Motor neuron (in vitro differentiated cells): ENCODE measurements at regions of chr14 and their contacts with region 1.

Region 1: DNA sequence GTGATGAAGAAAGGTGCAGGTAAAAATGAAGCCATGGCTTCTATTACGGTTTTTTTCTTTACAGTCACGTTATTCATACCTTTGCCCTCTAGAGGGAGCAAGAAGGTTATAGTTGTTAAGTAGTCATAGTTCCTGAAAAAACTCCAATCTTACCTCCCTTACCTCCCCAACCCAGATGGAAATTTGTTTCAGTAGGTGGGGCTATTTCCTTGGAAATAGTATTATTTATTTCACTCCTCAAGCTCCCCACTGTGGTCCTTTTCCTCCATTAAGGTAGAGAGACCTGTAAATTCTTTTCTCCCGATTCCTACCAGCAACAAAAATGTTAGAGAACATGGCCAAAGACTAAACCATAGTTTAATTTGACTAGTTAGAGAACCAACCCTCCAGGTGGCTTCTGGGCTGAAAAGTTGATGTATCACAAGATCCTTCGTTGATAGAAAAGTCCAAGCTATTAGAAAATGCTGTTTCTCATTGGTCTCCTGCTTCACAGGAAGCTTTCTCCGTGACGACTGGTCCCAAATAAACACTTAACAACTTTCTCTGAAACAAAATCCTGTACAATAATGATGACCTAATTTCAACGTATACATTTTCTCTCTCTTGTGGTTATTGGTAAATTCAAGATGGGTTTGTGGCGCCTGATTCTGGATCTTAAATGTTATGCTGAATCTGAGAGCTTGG is 43.5 kb downstream of the TMX1 start:
- ATAC-seq: peak; percentile 72 to 97 (median 82)
- H3K4me3 ChIP-seq: no peak overlapping the region
- H3K27ac ChIP-seq: no peak overlapping the region
- H3K4me1 ChIP-seq: no peaks in the 10 kb centered on the region

Region 2: DNA sequence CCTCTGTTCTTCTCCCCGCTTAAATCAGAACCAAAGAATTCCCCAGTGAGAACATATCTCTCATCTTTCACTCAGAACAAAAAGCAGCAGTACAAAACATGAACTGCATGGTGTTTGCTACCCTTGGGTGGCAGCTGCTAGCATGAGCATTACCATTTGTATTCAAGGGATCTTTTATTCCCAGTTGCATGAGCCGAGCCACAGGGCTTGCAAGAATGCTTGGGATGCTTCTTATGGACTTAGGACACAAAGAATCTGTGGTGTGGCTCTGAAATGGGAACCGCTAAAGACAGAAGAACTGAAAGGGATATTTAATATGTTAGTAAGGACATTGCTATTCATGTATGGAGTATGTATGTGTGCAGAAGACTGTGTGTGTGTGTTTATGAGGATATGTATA is 147.1 kb after region 1 on chr14:
- in situ Hi-C with region 1: no loop called
- ATAC-seq: peak; percentile 36 to 93 (median 84)
- H3K4me3 ChIP-seq: no peak overlapping the region
- H3K27ac ChIP-seq: peak overlapping the region in 1 of 2 donors; percentile 26
- H3K4me1 ChIP-seq: peaks cover 34 to 40% of the 10 kb centered on the region in 2 donors

Region 3: DNA sequence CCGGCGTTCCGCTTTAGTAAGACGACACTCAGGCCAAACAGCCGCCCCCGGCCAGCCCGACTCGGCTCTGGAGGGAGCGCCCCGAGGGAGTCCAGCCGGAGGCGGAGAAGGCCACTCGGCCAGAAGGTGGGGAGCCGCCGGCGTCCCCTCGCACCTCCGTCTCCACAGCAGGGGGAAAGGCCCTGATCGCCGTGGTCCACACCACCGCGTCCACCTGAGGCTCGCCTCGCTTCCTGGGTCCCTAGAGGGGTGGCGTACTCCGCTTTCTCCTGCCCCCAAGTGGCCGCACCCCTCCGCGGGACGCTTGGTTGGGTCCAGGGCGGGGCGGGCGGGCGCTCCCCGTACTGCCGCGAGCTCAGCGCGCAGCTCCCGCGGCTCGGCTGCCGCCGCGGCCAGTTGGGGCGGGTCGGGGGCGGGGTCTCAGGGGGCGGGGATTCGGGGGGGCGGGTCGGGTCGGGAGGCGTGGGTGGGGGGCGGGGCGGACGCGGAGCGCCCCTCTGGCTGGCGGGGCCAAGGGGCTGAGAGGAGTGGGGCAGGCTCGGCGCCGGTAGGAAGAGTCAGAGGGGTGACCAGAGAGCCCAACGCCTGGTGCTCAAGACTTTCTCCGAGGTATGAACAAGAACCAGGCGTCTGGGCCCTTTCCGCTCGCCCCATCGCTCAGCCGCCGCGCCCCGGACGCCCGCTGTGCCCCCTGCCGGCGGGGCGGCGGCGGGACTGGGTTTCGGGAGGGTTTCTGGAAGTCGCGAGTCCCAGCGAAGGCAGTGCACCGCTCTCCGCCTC is 368.0 kb after region 1 on chr14 and contains the start of gene FRMD6:
- in situ Hi-C with region 1: loop called in 3 of 9 experiments (anchors 25 kb)
- ATAC-seq: peak; percentile 64 to 85 (median 80)
- H3K4me3 ChIP-seq: peak within 1 kb of the TSS; percentile 61 to 91 (median 80)
- H3K27ac ChIP-seq: peak within 1 kb of the TSS; percentile 98
- H3K4me1 ChIP-seq: peaks cover 2 to 8% of the 10 kb centered on the region in 2 donors
- total RNA-seq, gene FRMD6: 2.8 to 129 (median 19.4) TPM

Region 4: DNA sequence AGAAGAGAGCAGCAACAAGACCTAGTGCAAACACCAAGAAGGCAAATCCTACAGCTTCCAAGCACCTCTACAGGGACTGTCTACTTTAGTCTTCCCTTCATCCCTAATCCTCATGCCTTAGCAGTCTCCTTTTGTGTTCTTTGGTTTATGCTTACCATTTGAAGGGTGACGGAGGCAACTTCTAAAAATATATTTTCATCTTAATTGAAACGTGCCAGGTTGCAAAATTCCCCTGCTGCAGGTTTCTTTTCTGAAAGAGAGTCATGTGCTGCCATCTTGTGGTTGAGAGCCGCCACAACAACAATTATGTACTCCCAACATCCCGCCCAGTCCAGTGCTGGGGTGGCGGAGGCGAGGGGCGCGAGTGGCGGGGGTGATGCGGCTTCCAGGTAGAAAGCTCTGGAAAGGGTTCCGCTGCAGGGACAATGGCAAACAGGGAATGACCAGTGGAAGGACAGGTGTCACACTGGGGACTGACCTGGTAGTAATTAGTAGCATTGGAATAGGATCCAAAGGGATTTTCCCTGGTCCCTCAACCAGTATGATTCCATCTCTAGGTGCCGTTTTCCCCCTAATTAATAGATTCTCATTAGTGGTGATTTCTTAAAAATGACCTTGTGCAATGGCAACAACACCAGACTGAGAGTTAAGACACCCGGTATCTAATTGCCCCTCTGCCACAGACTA is 496.6 kb after region 1 on chr14:
- in situ Hi-C with region 1: loop called in 7 of 9 experiments (anchors 10 to 25 kb)
- ATAC-seq: peak; percentile 65 to 81 (median 74)
- H3K4me3 ChIP-seq: no peak overlapping the region
- H3K27ac ChIP-seq: no peak overlapping the region
- H3K4me1 ChIP-seq: peaks cover 3 to 7% of the 10 kb centered on the region in 2 donors

Region 5: DNA sequence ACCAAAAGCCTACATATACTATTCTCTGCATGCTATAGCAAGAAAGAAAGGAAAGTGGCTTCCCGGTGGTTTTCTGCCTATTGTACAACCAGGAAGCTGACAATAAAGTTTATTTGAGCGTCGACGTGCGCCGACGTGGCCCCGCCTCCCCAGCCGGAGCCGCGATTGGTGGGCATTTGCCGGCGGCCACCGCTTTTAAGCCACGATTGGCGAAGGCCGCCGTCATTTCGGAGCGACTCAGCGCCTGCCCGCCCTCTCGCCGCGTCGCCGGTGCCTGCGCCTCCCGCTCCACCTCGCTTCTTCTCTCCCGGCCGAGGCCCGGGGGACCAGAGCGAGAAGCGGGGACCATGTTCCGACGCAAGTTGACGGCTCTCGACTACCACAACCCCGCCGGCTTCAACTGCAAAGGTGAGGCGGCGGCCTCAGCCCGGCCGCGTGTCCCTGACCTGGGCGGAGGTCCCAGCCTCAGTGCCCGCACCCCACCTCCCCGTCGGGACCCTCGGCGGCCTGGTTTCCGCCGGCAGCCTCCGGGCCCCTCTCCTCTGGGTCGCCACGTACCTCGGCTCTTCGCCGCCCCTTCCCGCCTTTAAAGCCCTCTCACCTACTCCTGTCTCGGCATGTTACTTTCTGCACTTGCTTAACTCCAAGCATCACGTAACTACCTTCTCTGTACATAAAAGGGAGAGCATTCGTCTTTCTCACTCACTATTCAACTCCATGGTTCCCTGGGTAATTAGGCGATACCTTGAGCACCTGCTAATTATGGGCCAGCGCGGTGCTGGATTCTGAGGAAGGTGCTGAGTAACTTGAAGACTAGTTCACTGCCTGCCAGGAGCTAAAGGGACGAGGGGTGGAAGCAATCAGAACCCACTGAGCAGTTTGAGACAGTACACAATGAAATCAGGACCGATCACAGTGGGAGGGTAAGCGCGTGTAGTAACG is 706.0 kb after region 1 on chr14 and contains the start of gene RTRAF:
- in situ Hi-C with region 1: loop called in 5 of 9 experiments (anchors 25 kb)
- ATAC-seq: peak; percentile 97 to 99 (median 97)
- H3K4me3 ChIP-seq: peak within 1 kb of the TSS; percentile 78 to 97 (median 85)
- H3K27ac ChIP-seq: peak within 1 kb of the TSS; percentile 90 to 91
- H3K4me1 ChIP-seq: peaks cover 0 to 18% of the 10 kb centered on the region in 2 donors
- total RNA-seq, gene RTRAF: 154 to 268 (median 214) TPM

Region 6: DNA sequence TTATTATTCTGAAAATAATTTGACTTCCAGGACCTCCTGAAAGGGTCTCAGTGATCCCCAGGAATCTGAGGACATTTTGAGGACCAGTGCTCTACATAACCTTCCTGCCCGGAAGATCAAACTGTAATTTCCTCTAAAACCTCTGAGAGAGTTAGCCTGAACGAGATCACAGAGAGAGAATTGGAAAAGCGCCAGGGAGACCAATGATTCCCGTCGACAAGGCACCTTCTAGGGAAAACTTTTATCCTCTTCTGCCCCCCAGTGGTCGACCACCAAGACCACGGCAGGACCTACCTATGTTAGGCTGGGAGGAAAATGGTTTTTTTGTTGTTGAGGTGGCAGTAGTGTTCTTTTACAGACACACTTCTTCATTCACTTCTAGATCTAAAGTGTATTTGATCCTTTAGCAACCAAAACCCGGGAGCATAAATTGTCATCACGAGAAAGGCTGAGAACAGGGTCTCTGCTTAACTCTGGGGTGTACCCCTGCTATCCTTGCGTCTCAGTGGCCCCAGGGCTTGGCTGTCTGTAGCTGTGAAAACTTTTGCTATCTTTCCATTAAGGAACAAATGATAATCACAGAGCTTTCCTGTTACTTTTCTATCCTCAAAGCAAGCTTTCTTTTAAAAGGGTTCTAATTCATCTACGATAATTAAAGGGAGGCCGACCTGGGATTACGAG is 848.2 kb after region 1 on chr14:
- in situ Hi-C with region 1: loop called in 1 of 9 experiments (anchors 25 kb)
- ATAC-seq: peak; percentile 88 to 100 (median 98)
- H3K4me3 ChIP-seq: no peak overlapping the region
- H3K27ac ChIP-seq: no peak overlapping the region
- H3K4me1 ChIP-seq: peaks cover 0 to 3% of the 10 kb centered on the region in 2 donors